WTC11 (cell line): ENCODE measurements at regions of chr20 and their contacts with region 1.

Region 1: GRCh38 chr20:8756410-8756809 is 312.5 kb upstream of the PLCB4 start:
- DNase-seq: no peak
- ATAC-seq: no peak
- H3K4me3 Mint-ChIP-seq: no peak overlapping the region
- H3K27ac Mint-ChIP-seq: no peak overlapping the region
- H3K4me1 Mint-ChIP-seq: no peaks in the 10 kb centered on the region
- H3K27me3 Mint-ChIP-seq: no peaks in the 10 kb centered on the region
- CTCF ChIP-seq: no peak

Region 2: DNA sequence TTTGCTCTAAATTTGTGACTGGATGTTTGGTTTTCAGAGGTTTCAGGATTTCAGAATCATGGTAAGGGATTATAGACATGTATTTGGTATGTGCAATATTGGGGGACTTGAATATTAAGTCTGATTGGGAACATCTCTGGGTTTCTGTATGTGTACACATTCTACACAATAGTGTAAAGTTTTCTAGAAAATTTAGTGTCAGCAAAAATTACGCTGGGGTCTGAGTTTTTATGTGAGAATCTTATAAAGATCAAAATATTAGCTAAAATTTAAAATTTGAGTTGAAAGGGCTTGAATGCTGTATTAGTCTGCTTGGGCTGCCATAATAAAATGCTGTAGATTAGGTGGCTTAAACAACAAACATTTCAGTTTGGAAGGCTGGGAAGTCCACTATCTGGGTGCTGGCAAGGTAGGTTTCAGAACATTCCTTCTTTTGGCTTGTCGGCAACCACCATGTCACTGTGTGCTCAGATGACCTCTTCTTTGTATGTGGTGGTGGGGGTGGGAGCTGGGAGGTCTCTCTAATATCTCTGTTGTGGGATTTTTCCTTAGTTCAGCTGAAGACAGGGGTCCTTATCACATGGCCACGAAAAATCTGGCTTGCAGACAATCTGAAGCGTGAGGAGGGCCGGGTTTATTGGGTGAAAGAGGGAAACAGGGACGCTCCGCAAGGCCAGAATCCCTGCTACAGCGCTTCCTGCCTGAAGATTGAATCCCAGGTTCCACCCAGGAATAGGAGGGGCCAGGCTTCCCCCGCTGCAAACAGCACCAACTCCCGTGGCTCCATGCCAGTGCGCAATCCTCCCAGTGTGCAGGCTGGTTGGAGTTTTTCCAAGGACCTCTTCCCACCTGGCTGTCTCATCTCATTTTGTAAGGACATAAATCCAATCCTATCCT is 324.6 kb before region 1 on chr20:
- CTCF ChIA-PET with region 1: no interaction called
- POLR2A ChIA-PET with region 1: no interaction called
- DNase-seq: peak; percentile 14
- ATAC-seq: peak; percentile 86
- H3K4me3 Mint-ChIP-seq: no peak overlapping the region
- H3K27ac Mint-ChIP-seq: no peak overlapping the region
- H3K4me1 Mint-ChIP-seq: peaks cover 31% of the 10 kb centered on the region
- H3K27me3 Mint-ChIP-seq: no peaks in the 10 kb centered on the region
- CTCF ChIP-seq: no peak

Region 3: GRCh38 chr20:8646033-8646441 is 110.4 kb before region 1 on chr20:
- CTCF ChIA-PET with region 1: no interaction called
- POLR2A ChIA-PET with region 1: no interaction called
- DNase-seq: no peak
- ATAC-seq: no peak
- H3K4me3 Mint-ChIP-seq: no peak overlapping the region
- H3K27ac Mint-ChIP-seq: no peak overlapping the region
- H3K4me1 Mint-ChIP-seq: peaks cover 3% of the 10 kb centered on the region; the same call in 1 of the 2 replicates
- H3K27me3 Mint-ChIP-seq: no peaks in the 10 kb centered on the region
- CTCF ChIP-seq: no peak

Region 4: DNA sequence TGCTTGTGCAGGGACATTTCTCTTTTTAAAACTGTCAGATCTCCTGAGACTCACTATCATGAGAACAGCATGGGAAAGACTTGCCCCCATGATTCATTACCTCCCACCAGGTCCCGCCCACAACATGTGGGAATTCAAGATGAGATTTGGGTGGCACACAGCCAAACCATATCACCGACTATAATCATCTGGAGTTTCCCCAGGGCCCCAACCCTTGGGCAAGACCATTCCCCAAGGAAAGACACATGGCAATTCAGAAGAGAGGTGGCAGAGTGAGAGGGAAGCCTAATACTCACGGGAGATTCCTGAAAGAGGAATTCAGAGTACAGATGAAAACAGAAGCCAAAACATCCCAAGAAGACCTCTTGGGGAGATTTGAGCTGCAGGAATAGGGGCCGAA is 21.5 kb after region 1 on chr20:
- CTCF ChIA-PET with region 1: interaction called, 10 read pairs
- POLR2A ChIA-PET with region 1: no interaction called
- DNase-seq: no peak
- ATAC-seq: no peak
- H3K4me3 Mint-ChIP-seq: no peak overlapping the region
- H3K27ac Mint-ChIP-seq: no peak overlapping the region
- H3K4me1 Mint-ChIP-seq: peaks cover 7% of the 10 kb centered on the region; the same call in 1 of the 2 replicates
- H3K27me3 Mint-ChIP-seq: no peaks in the 10 kb centered on the region
- CTCF ChIP-seq: no peak

Region 5: GRCh38 chr20:8790442-8791074 is 34.1 kb after region 1 on chr20:
- CTCF ChIA-PET with region 1: interaction called, 22 read pairs
- POLR2A ChIA-PET with region 1: no interaction called
- DNase-seq: peak; percentile 42
- ATAC-seq: peak; percentile 60; the same call in 1 of the 2 replicates
- H3K4me3 Mint-ChIP-seq: no peak overlapping the region
- H3K27ac Mint-ChIP-seq: no peak overlapping the region
- H3K4me1 Mint-ChIP-seq: peaks cover 19% of the 10 kb centered on the region
- H3K27me3 Mint-ChIP-seq: peaks cover 5% of the 10 kb centered on the region; the same call in 1 of the 2 replicates
- CTCF ChIP-seq: peak; percentile 98

Region 6: GRCh38 chr20:8812817-8813216 is 56.4 kb after region 1 on chr20:
- CTCF ChIA-PET with region 1: interaction called, 19 read pairs
- POLR2A ChIA-PET with region 1: no interaction called
- DNase-seq: peak; percentile 22
- ATAC-seq: peak; percentile 79
- H3K4me3 Mint-ChIP-seq: no peak overlapping the region
- H3K27ac Mint-ChIP-seq: peak overlapping the region; percentile 84
- H3K4me1 Mint-ChIP-seq: peaks cover 53% of the 10 kb centered on the region
- H3K27me3 Mint-ChIP-seq: no peaks in the 10 kb centered on the region
- CTCF ChIP-seq: no peak

Region 7: DNA sequence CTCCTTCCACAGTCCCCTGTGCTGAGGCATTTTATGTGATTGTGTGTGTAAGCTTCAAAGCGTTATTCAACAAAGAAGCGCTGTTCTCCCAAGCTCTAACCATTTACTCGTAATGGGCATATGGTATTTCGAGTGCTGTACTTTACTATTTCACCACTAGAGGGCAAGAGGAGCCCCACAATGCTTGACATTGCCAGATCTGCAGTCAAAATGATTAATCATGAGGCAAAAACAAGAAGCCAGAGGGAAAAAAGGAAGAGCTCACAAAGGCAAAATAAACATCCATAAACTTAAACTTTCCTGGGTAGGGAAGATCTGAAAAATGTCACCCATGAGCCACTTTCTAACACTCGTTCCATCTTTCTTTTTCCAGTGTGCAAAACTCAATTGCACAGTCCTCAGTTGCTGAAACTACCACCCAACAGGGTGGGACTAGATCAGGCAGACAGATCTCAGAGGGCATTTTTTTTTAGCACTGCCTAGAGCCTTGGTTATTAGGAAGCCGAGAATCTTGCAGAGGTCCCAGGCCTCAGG is 97.5 kb after region 1 on chr20:
- CTCF ChIA-PET with region 1: interaction called, 16 read pairs
- POLR2A ChIA-PET with region 1: no interaction called
- DNase-seq: no peak
- ATAC-seq: peak; percentile 89
- H3K4me3 Mint-ChIP-seq: no peak overlapping the region
- H3K27ac Mint-ChIP-seq: no peak overlapping the region
- H3K4me1 Mint-ChIP-seq: no peaks in the 10 kb centered on the region; the same call in 1 of the 2 replicates
- H3K27me3 Mint-ChIP-seq: no peaks in the 10 kb centered on the region
- CTCF ChIP-seq: peak; percentile 80

Region 8: GRCh38 chr20:9035129-9035528 is 278.7 kb after region 1 on chr20:
- CTCF ChIA-PET with region 1: no interaction called
- POLR2A ChIA-PET with region 1: interaction called, 11 read pairs
- DNase-seq: no peak
- ATAC-seq: no peak
- H3K4me3 Mint-ChIP-seq: no peak overlapping the region
- H3K27ac Mint-ChIP-seq: no peak overlapping the region
- H3K4me1 Mint-ChIP-seq: peaks cover 3% of the 10 kb centered on the region; the same call in 1 of the 2 replicates
- H3K27me3 Mint-ChIP-seq: no peaks in the 10 kb centered on the region; the same call in 1 of the 2 replicates
- CTCF ChIP-seq: no peak